SK-N-SH (cell line): ENCODE measurements at regions of chr1 and their contacts with region 1.

Region 1: GRCh38 chr1:178749581-178750166 is 24.6 kb downstream of the RALGPS2 start:
- DNase-seq: no peak
- H3K4me3 ChIP-seq: no peak overlapping the region
- H3K27ac ChIP-seq: no peak overlapping the region
- H3K4me1 ChIP-seq: no peaks in the 10 kb centered on the region; a peak in 1 of 4 replicates
- H3K27me3 ChIP-seq: no peaks in the 10 kb centered on the region
- CTCF ChIP-seq: no peak
- EP300 ChIP-seq: no peak
- RAD21 ChIP-seq: no peak

Region 2: GRCh38 chr1:178739285-178740045 is 10.2 kb before region 1 on chr1:
- CTCF ChIA-PET with region 1: interaction called, 19 read pairs
- POLR2A ChIA-PET with region 1: no interaction called
- DNase-seq: no peak
- H3K4me3 ChIP-seq: no peak overlapping the region
- H3K27ac ChIP-seq: peak overlapping the region in 1 of 2 experiments; percentile 12; a peak in 1 of 4 replicates
- H3K4me1 ChIP-seq: peaks cover 0 to 3% of the 10 kb centered on the region in 2 experiments; a peak in 2 of 4 replicates
- H3K27me3 ChIP-seq: no peaks in the 10 kb centered on the region
- CTCF ChIP-seq: no peak
- EP300 ChIP-seq: no peak
- RAD21 ChIP-seq: no peak